Sigmoid colon (tissue), 7 donors: ENCODE measurements at regions of chr5 and their contacts with region 1.

Region 1: DNA sequence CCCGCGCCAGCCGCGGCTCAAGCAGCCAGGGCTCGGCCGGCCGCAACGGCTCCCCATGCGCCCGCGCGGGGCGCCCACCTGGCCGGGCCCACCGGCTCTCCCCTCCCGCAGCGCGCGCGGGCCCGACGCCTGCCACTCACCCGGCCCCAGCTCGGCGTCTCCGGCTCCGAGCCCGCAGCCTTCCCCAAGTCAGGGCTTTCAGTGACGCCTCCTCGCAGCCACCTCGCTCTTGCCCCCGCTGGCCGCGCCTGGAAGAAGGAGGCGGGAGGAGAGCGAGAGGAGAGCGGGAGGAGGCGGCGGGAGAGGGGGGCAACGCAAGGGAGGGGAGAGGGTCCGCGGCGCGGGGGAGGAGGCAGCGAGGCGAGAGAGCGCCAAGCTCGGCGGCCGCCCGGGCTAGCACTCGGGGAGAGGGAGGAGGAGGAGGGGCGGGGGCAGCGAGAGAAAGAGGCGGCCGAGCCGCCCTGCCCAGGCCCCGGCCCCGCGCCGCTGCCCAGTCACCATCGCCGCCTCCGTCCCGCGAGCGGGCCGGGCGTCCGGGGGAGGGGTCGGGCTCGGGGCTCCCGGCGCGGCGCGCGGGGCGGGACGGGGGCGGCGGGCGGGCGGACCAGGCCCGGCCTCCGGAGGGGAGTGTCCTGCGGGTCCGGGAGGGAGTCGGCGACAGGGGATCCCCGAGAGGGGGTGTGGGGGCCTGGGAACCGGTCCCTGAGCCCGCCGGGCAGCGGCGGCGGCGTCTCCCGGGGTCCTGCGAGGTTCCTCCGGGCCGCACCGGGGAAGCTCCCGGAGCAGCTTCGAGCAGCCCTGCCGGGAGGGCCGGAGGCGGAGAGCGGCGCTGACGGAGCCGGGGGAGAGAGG is at the start of gene LHFPL2:
- DNase-seq: peak; percentile 88
- H3K4me3 ChIP-seq: peak within 1 kb of the TSS; percentile 67 to 94 (median 90)
- H3K27ac ChIP-seq: peak within 1 kb of the TSS; percentile 92 to 97 (median 96)
- H3K4me1 ChIP-seq: peaks cover 0 to 45% (median 40%) of the 10 kb centered on the region in 4 donors
- H3K27me3 ChIP-seq: no peaks in the 10 kb centered on the region
- CTCF ChIP-seq: no peak
- EP300 ChIP-seq: no peak
- POLR2A ChIP-seq: peak in 1 of 2 donors; percentile 27
- total RNA-seq, gene LHFPL2: 21.4 to 34.9 (median 26.6) TPM

Region 2: DNA sequence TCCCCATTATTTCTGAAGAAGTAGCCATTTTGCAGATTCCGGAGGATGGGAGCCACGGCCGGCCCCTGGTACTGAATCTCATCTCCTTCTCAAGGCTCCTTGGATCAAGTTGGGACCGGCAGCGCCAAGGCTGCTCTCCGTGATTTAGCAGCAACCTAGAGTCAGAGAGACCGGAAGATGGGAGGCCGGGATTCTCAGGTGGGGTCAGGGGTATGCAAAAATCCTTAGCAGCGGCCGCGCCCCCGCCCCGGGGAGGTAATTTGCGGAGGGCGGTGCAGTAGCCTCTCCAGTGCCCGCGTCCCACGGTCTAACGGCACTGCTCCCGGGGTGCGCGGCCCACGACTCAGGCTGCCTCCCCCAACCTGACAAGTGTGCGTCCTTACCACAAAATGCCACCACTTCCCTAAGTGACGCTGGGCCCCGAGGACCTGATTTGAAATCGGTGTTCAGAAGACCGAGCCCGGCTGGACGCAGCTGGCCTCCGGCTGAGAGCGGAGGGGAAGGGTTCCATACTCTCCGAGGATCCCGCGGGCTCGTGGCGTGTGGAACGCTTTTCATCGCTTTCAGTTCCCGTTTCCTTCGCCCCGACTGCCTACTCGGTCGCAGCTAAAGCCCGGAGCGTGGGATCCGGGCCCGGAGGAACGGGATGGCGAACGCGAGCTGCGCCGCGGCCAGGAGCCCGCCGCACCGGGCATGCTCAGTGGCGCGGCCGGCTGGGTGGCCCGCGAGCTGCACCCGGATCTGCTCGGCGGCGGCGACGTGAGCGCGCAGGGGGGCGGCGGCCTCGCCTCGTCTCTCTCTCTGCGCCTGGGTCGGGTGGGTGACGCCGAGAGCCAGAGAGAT is 288.5 kb before region 1 on chr5 and contains the start of gene SCAMP1:
- intact Hi-C with region 1: loop called (anchors 10 kb)
- DNase-seq: peak; percentile 95
- H3K4me3 ChIP-seq: peak within 1 kb of the TSS; percentile 83 to 97 (median 88)
- H3K27ac ChIP-seq: peak within 1 kb of the TSS; percentile 87 to 95 (median 92)
- H3K4me1 ChIP-seq: peaks cover 3 to 26% (median 12%) of the 10 kb centered on the region in 4 donors
- H3K27me3 ChIP-seq: no peaks in the 10 kb centered on the region
- CTCF ChIP-seq: peak in 2 of 4 experiments; percentile 12 to 52
- EP300 ChIP-seq: peak in 1 of 4 donors; percentile 24
- POLR2A ChIP-seq: no peak
- total RNA-seq, gene SCAMP1: 31.0 to 45.3 (median 37.7) TPM

Region 3: DNA sequence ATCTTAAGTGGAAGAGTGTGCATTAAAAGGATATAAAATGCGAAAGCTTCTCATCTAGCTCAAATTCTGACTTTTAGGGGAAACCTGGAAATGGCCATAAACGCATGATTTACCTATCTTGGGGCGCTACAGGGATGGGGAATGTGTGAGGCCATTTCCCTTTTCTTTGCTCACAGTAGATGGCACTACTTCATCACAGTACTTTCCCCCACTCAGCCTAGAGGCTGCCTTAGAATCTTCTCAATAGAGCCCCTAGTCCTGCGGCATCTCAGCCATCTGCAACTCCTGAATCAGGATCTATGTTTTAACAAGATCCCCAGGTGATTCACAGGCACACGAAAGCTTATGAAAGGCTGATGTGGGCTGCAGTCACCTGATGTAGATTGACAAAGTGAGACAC is 110.8 kb before region 1 on chr5:
- intact Hi-C with region 1: loop called (anchors 2 kb)
- DNase-seq: peak; percentile 70
- H3K4me3 ChIP-seq: no peak overlapping the region
- H3K27ac ChIP-seq: peak overlapping the region in 1 of 4 donors; percentile 66
- H3K4me1 ChIP-seq: peaks cover 0 to 71% (median 46%) of the 10 kb centered on the region in 4 donors
- H3K27me3 ChIP-seq: no peaks in the 10 kb centered on the region
- CTCF ChIP-seq: peak; percentile 43 to 68 (median 52)
- EP300 ChIP-seq: no peak
- POLR2A ChIP-seq: no peak

Region 4: DNA sequence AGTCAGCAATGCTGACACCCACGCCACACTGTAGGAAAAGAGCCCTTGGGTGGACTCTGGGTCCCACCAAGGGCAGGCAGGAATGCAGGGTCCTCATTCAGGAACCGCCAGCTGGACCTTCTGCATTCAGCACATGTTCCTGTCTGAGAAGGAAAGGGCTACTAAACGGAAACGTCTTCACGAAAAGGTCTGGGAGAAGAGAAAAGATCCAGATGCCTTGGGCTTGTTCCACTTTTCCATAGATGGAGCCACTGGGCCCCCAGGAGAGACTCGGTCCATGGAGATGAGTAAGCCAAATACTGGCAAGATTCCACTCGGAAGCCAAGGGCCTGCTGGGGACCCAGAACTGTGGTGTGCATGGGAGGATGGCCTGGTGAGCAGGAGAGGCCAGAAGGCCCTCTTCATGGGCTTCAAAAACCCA is 38.4 kb before region 1 on chr5:
- intact Hi-C with region 1: loop called (anchors 5 kb)
- DNase-seq: peak; percentile 93
- H3K4me3 ChIP-seq: no peak overlapping the region
- H3K27ac ChIP-seq: peak overlapping the region; percentile 75 to 91 (median 82)
- H3K4me1 ChIP-seq: peaks cover 0 to 94% (median 80%) of the 10 kb centered on the region in 4 donors
- H3K27me3 ChIP-seq: no peaks in the 10 kb centered on the region
- CTCF ChIP-seq: no peak
- EP300 ChIP-seq: peak; percentile 58 to 79 (median 69)
- POLR2A ChIP-seq: no peak

Region 5: GRCh38 chr5:78912085-78912771 is 263.6 kb after region 1 on chr5:
- intact Hi-C with region 1: loop called (anchors 10 kb)
- DNase-seq: no peak
- H3K4me3 ChIP-seq: no peak overlapping the region
- H3K27ac ChIP-seq: peak overlapping the region; percentile 12 to 71 (median 44)
- H3K4me1 ChIP-seq: peaks cover 0 to 39% (median 32%) of the 10 kb centered on the region in 4 donors
- H3K27me3 ChIP-seq: no peaks in the 10 kb centered on the region
- CTCF ChIP-seq: no peak
- EP300 ChIP-seq: no peak
- POLR2A ChIP-seq: no peak

Region 6: GRCh38 chr5:78958672-78959445 is 310.3 kb after region 1 on chr5:
- intact Hi-C with region 1: no loop called
- DNase-seq: no peak
- H3K4me3 ChIP-seq: no peak overlapping the region
- H3K27ac ChIP-seq: no peak overlapping the region
- H3K4me1 ChIP-seq: no peaks in the 10 kb centered on the region
- H3K27me3 ChIP-seq: no peaks in the 10 kb centered on the region
- CTCF ChIP-seq: no peak
- EP300 ChIP-seq: no peak
- POLR2A ChIP-seq: no peak